PC-3 (cell line): ENCODE measurements at regions of chr10 and their contacts with region 1.

Region 1: DNA sequence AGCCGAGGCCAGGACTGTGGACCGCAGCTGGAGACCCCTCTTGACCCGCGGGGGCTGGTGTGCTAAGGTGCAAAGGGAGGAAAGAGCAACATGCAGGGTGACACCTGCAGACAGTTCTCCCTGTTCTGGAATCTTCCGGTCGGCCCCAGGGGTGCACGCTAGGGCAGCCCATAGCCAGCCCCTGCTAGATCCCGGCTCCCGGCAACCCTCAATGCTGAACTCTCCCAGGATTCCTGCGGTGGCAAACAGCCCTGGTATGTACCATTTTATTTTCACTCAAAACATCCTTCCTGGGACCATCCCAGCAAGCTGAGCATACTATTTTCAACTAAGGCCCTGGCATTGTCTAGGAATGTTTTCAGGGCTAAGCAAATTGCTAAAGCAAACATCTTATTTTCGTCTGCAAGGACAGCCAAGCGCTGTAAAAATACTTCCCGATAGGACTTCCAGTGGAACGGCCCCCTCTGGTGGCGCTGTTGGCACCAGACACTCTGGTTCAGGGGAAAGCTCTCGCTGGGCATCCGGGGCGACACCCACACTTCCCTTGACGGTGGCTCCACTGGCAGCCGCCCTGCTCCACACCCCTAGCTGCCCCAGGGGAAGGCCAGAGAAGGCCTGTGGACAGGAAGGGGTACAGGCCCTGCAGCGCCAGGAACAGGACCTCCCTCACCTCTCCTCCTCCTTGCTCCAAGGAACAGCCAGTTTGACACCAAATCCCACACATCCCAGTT is 99.4 kb downstream of the CTBP2 start:
- DNase-seq: peak; percentile 74
- ATAC-seq: peak; percentile 65
- H3K4me3 ChIP-seq: no peak overlapping the region
- H3K27ac ChIP-seq: peak overlapping the region; percentile 42
- H3K4me1 ChIP-seq: peaks cover 44% of the 10 kb centered on the region
- H3K27me3 ChIP-seq: no peaks in the 10 kb centered on the region
- CTCF ChIP-seq: peak; percentile 85

Region 2: GRCh38 chr10:124992462-124993344 is 68.3 kb before region 1 on chr10:
- CTCF ChIA-PET with region 1: no interaction called
- POLR2A ChIA-PET with region 1: no interaction called
- intact Hi-C with region 1: loop called (anchors 1 kb)
- DNase-seq: peak; percentile 68
- ATAC-seq: peak; percentile 64
- H3K4me3 ChIP-seq: no peak overlapping the region
- H3K27ac ChIP-seq: no peak overlapping the region
- H3K4me1 ChIP-seq: no peaks in the 10 kb centered on the region
- H3K27me3 ChIP-seq: no peaks in the 10 kb centered on the region
- CTCF ChIP-seq: peak; percentile 59

Region 3: GRCh38 chr10:125015312-125015944 is 45.6 kb before region 1 on chr10:
- CTCF ChIA-PET with region 1: no interaction called
- POLR2A ChIA-PET with region 1: no interaction called
- intact Hi-C with region 1: no loop called
- DNase-seq: no peak
- ATAC-seq: no peak
- H3K4me3 ChIP-seq: no peak overlapping the region
- H3K27ac ChIP-seq: no peak overlapping the region
- H3K4me1 ChIP-seq: peaks cover 8% of the 10 kb centered on the region; the same call in 1 of the 2 replicates
- H3K27me3 ChIP-seq: no peaks in the 10 kb centered on the region
- CTCF ChIP-seq: no peak

Region 4: DNA sequence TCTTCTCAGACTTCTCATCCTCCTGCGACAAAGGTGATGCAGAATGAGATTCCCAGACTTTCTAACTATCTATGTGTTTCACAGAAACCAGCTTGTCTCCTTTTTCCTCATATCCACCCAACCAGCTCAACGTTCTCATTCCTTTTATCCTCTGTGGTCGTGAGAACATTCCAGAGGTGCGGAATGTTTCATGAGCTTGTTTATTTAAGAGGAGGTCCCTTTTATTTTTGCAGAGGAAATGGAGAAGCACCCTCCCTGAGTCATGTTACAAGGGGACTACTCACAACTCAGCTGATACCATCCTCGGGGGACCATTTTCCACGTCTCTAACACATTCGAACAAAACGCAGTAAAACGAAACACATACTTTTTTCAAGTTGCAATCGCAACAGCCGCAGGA is 25.9 kb before region 1 on chr10:
- CTCF ChIA-PET with region 1: no interaction called
- POLR2A ChIA-PET with region 1: interaction called, 3 read pairs
- intact Hi-C with region 1: loop called (anchors 2 kb)
- DNase-seq: peak; percentile 90
- ATAC-seq: peak; percentile 82
- H3K4me3 ChIP-seq: peak overlapping the region; percentile 50
- H3K27ac ChIP-seq: peak overlapping the region; percentile 93
- H3K4me1 ChIP-seq: peaks cover 55% of the 10 kb centered on the region
- H3K27me3 ChIP-seq: no peaks in the 10 kb centered on the region
- CTCF ChIP-seq: no peak

Region 5: DNA sequence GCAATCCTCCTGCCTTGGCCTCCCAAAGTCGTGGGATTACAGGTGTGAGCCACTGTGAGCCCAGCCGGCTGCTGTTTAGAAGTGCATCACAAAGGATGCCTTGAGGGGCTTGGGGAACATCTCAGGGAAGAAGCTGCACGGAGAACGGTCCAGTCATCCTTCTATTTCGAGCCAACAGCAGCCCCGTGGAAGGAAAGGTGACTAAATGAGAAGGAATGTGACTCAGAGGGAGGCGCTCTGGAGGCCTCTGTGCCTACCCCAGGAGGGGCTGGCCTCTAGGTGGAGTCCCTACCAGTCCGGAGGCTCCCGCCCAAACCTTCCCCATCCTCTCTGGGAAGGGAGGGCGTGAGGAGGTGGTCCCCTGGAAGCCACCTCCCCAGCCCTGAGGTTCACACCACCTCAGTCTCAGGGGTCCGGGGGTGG is 23.2 kb after region 1 on chr10:
- CTCF ChIA-PET with region 1: no interaction called
- POLR2A ChIA-PET with region 1: interaction called, 6 read pairs
- intact Hi-C with region 1: loop called (anchors 1 kb)
- DNase-seq: peak; percentile 87
- ATAC-seq: peak; percentile 86
- H3K4me3 ChIP-seq: no peak overlapping the region
- H3K27ac ChIP-seq: peak overlapping the region; percentile 77
- H3K4me1 ChIP-seq: peaks cover 28% of the 10 kb centered on the region
- H3K27me3 ChIP-seq: no peaks in the 10 kb centered on the region
- CTCF ChIP-seq: peak; percentile 40; the same call in 1 of the 2 replicates

Region 6: DNA sequence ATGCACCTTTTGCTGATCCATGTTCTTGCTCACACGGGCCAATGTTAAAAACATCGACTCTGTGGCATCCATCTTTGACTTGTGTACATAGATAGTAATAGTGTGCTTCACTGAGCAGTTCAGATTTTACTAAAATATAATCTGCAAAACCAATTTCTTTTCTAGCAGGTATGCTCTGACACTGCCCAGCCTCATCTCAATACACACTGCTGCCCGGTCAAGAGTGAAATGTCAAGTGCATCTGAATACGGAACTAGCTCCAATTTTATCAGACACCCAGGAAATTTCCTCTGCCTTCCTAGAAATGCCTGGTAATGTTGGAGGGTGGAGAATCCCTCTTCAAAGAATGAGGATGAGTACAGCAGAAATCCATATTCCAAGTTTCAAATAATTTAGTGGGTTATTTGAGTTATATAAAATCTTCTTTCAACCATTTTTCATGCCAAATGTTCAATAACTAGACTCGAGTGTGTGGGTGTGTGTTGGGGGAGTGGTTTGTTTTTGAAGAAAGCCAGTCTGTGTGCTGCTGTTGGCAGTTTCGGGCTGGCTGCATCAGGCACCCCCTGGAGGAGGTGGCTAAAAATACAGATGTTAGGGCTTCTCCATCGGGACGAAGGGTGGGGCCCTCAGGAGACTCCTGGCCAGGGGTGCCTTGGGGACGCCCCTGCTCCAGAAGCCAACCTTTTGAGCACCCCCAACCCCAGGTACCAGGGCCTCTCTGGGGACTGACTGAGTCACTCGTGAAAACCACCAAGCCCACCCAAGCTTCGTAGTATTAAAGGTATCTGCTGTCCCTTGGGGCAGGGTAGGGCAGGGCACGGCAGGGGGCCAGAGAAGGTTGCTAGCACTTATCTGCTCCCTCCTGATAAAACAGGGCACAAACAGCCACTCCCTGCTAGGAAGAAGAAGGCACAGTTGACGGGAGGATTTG is 84.0 kb after region 1 on chr10:
- CTCF ChIA-PET with region 1: no interaction called
- POLR2A ChIA-PET with region 1: no interaction called
- intact Hi-C with region 1: no loop called
- DNase-seq: no peak
- ATAC-seq: 0 out of 2 replicates have a peak, but pooled peaks have one; percentile 9
- H3K4me3 ChIP-seq: no peak overlapping the region
- H3K27ac ChIP-seq: no peak overlapping the region
- H3K4me1 ChIP-seq: peaks cover 24% of the 10 kb centered on the region
- H3K27me3 ChIP-seq: no peaks in the 10 kb centered on the region
- CTCF ChIP-seq: peak; percentile 60

Region 7: GRCh38 chr10:125719146-125720001 is 658.4 kb after region 1 on chr10 and contains the start of gene EDRF1:
- CTCF ChIA-PET with region 1: no interaction called
- POLR2A ChIA-PET with region 1: interaction called, 5 read pairs
- intact Hi-C with region 1: loop called (anchors 1 kb)
- DNase-seq: peak; percentile 97
- ATAC-seq: peak; percentile 95
- H3K4me3 ChIP-seq: peak within 1 kb of the TSS; percentile 94
- H3K27ac ChIP-seq: peak within 1 kb of the TSS; percentile 52
- H3K4me1 ChIP-seq: peaks cover 15% of the 10 kb centered on the region
- H3K27me3 ChIP-seq: no peaks in the 10 kb centered on the region
- CTCF ChIP-seq: no peak
- total RNA-seq, gene EDRF1: 16.0 and 17.7 TPM in 2 replicates